ENCODE measurements at regions of chr5 and their contacts with region 1.

Region 1: DNA sequence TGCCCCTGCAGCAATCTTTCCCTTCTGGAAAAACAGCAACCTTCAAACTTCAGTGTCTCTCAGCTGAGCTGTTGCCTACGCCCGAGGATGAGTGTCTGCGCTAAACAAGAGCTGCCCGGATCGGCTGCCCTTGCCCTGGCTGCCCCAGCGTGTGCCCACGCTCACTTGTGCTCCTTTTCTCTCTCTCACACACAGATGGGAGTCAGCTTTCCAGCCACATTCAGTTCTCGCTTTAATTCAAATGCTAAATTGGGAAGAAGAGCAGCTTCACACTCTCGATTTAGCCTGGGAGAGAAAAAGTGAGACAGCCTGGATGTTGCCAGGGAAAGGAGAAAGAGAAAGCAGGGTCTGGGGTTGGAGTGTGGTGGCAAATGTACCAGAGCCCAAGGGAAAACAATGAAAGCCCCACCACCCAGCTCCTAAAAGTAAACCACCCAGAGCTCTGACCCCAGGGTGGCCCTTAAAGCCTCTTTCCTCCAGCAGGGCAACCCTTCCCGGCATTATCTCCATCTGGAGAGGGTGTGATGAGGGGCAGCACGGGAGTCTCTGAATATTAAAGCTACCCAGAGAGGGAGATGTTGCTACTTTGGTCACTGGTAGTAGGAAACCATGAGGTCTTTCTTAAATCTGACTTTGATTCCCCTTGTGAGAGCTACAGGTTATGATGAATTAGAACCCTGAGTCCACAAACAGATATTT is 9.9 kb upstream of the EGR1 start:
- DNase-seq: no peak
- H3K4me3 ChIP-seq: no peak overlapping the region
- H3K27ac ChIP-seq: no peak overlapping the region
- H3K4me1 ChIP-seq: no peaks in the 10 kb centered on the region
- H3K27me3 ChIP-seq: no peaks in the 10 kb centered on the region
- CTCF ChIP-seq: no peak

Region 2: GRCh38 chr5:138975098-138975847 is 519.9 kb after region 1 on chr5:
- CTCF ChIA-PET with region 1: no interaction called
- POLR2A ChIA-PET with region 1: no interaction called
- intact Hi-C with region 1: no loop called
- DNase-seq: no peak
- H3K4me3 ChIP-seq: no peak overlapping the region
- H3K27ac ChIP-seq: peak overlapping the region; percentile 78
- H3K4me1 ChIP-seq: peaks cover 49% of the 10 kb centered on the region
- H3K27me3 ChIP-seq: no peaks in the 10 kb centered on the region
- CTCF ChIP-seq: no peak

Region 3: GRCh38 chr5:139061274-139061673 is 605.9 kb after region 1 on chr5:
- CTCF ChIA-PET with region 1: no interaction called
- POLR2A ChIA-PET with region 1: no interaction called
- intact Hi-C with region 1: no loop called
- DNase-seq: no peak
- H3K4me3 ChIP-seq: no peak overlapping the region
- H3K27ac ChIP-seq: no peak overlapping the region
- H3K4me1 ChIP-seq: peaks cover 14% of the 10 kb centered on the region
- H3K27me3 ChIP-seq: no peaks in the 10 kb centered on the region
- CTCF ChIP-seq: no peak

Region 4: DNA sequence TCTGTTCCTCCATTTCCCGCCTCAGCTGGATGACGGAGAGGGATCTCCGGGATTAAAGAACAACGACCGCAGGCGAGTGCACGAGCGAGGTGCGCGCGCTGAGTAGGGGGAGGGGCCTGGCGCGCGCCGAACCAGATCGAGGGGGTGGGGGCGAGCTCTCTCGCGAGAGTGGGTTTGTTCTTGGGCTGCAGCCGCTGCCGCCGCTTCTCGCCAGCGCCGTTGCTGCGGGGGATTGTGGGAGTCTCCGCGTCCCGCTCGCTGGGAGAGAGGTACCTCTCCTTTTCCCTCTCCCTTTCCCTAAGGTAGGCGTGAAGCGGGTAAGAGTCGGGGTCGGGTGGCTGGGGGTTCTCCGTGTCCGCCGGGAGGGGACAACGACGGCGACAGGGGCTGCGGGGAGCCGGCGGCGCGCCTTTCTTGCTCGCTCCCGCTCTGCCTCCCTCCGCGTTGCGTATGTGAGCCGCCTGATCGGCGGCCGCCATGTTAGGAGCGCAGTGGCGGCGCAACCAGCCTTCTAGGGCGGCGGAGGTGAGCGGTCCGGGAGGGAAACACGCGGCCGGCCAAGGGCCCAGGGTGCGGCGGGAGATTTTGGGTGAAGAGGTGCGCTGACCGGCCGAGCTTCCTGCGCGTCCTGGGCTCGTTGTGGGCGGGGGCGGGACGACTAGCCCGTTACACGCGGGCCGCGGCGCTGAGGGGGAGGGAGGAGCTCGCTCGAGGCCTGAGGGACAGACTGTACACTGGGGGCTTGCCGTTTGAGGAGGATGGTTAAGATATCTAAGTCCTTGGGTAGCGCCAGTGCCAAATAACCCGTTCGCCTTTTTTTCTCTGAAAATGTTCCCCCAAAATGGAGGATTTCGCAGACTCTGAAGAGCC is 838.4 kb after region 1 on chr5 and contains the start of gene MATR3:
- CTCF ChIA-PET with region 1: no interaction called
- POLR2A ChIA-PET with region 1: interaction called, 11 read pairs
- intact Hi-C with region 1: no loop called
- DNase-seq: peak; percentile 98
- H3K4me3 ChIP-seq: peak within 1 kb of the TSS; percentile 76
- H3K27ac ChIP-seq: peak within 1 kb of the TSS; percentile 99
- H3K4me1 ChIP-seq: peaks cover 27% of the 10 kb centered on the region
- H3K27me3 ChIP-seq: no peaks in the 10 kb centered on the region
- CTCF ChIP-seq: no peak
- total RNA-seq, gene MATR3: 286 and 299 TPM in 2 replicates

Region 5: GRCh38 chr5:139304391-139305324 is 849.3 kb after region 1 on chr5:
- CTCF ChIA-PET with region 1: no interaction called
- POLR2A ChIA-PET with region 1: interaction called, 10 read pairs
- intact Hi-C with region 1: no loop called
- DNase-seq: no peak
- H3K4me3 ChIP-seq: no peak overlapping the region
- H3K27ac ChIP-seq: no peak overlapping the region
- H3K4me1 ChIP-seq: peaks cover 44% of the 10 kb centered on the region
- H3K27me3 ChIP-seq: no peaks in the 10 kb centered on the region
- CTCF ChIP-seq: no peak

Measured in A673 (cell line).